Mammary epithelial cell (primary cell): ENCODE measurements at regions of chr11 and their contacts with region 1.

Region 1: GRCh38 chr11:63768237-63769043 is at the start of gene ZFTA:
- DNase-seq: peak; percentile 43
- H3K4me3 ChIP-seq: peak within 1 kb of the TSS; percentile 65 to 84 (median 71)
- H3K27ac ChIP-seq: no peak within 1 kb of the TSS
- H3K4me1 ChIP-seq: peaks cover 11% of the 10 kb centered on the region
- H3K27me3 ChIP-seq: no peaks in the 10 kb centered on the region
- CTCF ChIP-seq: peak; percentile 20 to 47
- total RNA-seq, gene ZFTA: 4.7 to 10.0 TPM

Region 2: DNA sequence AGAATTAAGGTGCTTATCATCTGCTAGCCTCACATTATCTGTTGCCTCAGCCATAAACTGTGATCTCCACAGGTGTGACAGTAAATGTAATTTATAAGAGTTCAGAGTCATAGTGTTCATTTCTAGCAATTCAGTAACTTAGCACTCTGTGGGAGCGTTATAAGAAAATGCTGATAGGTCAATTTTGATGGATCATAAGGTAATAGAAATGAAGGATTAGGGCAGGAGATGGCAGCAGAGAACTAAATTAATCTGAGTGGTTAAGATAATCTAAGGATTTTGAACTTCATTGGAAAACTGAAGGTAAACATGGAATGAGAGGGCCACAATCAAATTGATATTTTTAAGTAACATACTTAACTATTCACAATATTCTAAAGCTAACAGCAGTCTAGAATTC is 425.3 kb before region 1 on chr11:
- CTCF ChIA-PET with region 1: no interaction called
- dilution Hi-C with region 1: no loop called
- in situ Hi-C with region 1: no loop called
- intact Hi-C with region 1: no loop called
- DNase-seq: no peak
- H3K4me3 ChIP-seq: no peak overlapping the region
- H3K27ac ChIP-seq: no peak overlapping the region
- H3K4me1 ChIP-seq: no peaks in the 10 kb centered on the region
- H3K27me3 ChIP-seq: no peaks in the 10 kb centered on the region
- CTCF ChIP-seq: no peak

Region 3: GRCh38 chr11:63635762-63636465 is 132.5 kb before region 1 on chr11:
- CTCF ChIA-PET with region 1: no interaction called
- dilution Hi-C with region 1: no loop called
- in situ Hi-C with region 1: no loop called
- intact Hi-C with region 1: no loop called
- DNase-seq: peak; percentile 37
- H3K4me3 ChIP-seq: no peak overlapping the region
- H3K27ac ChIP-seq: no peak overlapping the region
- H3K4me1 ChIP-seq: no peaks in the 10 kb centered on the region
- H3K27me3 ChIP-seq: no peaks in the 10 kb centered on the region
- CTCF ChIP-seq: peak; percentile 62 to 79

Region 4: DNA sequence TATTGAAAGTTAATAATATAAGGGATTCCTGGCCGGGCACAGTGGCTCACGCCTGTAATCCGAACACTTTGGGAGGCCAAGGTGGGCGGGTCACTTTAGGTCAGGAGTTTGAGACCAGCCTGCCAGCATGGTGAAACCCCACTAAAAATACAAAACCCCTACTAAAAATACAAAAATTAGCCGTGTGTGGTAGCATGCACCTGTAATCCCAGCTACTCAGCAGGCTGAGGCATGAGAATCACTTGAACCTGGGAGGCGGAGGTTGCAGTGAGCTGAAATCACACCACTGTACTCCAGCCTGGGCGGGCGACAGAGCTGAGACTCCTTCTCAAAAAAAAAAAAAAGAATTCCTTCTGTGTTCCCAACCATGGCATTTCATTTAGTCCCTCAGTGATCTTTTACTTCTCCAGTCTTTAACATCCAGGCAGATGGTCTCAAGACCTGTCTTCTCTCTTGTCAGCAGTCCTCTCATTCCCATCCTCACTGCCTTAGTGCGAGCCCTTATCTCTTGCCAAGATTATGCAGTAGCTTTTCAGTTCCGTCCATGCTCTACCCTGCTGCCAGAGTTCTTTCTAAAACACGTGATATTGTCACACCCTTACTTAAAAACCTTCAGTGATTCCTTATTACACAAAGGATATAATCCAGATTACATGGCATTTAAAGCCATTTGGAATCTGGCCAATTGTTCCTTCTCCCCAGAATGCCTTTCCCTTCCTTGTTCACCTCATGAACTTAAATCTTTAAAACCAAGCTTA is 69.3 kb before region 1 on chr11:
- CTCF ChIA-PET with region 1: no interaction called
- dilution Hi-C with region 1: no loop called
- in situ Hi-C with region 1: no loop called
- intact Hi-C with region 1: no loop called
- DNase-seq: no peak
- H3K4me3 ChIP-seq: no peak overlapping the region
- H3K27ac ChIP-seq: no peak overlapping the region
- H3K4me1 ChIP-seq: no peaks in the 10 kb centered on the region
- H3K27me3 ChIP-seq: no peaks in the 10 kb centered on the region
- CTCF ChIP-seq: no peak

Region 5: GRCh38 chr11:63813035-63813562 is 44.7 kb after region 1 on chr11 and contains the start of gene SPINDOC:
- CTCF ChIA-PET with region 1: interaction called, 11 read pairs
- dilution Hi-C with region 1: loop called (anchors 5 kb)
- in situ Hi-C with region 1: no loop called
- intact Hi-C with region 1: loop called (anchors 2 kb)
- DNase-seq: peak; percentile 68
- H3K4me3 ChIP-seq: peak within 1 kb of the TSS; percentile 71 to 97 (median 95)
- H3K27ac ChIP-seq: peak within 1 kb of the TSS; percentile 19
- H3K4me1 ChIP-seq: peaks cover 13% of the 10 kb centered on the region
- H3K27me3 ChIP-seq: no peaks in the 10 kb centered on the region
- CTCF ChIP-seq: no peak
- total RNA-seq, gene SPINDOC: 19.2 to 24.4 TPM

Region 6: DNA sequence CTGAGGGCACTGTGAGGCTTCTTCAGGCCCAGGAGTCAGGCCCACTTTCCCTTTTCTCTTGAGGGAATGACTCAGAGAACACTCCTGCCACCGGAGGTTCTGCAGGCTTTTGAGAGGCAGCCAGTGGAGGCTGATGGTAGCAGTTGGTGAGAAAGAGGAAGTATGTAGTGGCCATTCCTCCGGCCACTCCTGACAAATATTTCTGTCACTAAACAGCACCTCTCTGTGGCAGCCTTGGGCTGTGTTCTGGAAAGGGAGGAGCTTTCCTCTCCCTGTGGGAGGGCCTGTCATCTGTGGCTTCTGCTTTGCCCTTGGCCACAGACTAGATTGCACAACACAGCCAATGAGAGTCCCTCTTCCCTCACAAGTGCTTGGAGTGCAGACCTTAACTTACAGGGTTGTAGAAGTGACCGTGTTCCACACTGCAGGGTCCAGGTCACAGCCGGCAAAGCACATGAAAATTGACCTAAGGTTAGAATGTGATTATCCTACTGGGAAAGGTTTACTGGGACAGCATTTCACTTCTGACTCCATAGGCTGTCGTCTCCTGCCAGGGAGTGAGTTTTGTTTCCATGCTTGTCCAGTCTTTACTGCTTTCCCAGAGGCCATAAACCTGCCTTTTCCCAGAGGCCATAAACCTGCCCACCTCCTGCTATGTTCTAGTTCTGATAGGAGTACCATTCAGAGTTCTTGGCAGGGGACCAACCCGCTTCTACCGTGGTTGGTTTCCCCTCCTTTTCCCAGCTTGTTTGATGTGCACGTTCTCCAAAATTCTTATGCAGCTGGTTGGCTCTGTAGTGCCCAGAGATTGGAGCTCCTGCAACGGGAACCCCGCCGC is 103.7 kb after region 1 on chr11:
- CTCF ChIA-PET with region 1: no interaction called
- dilution Hi-C with region 1: no loop called
- in situ Hi-C with region 1: loop called in 1 of 2 experiments (anchors 25 kb)
- intact Hi-C with region 1: no loop called
- DNase-seq: peak; percentile 93
- H3K4me3 ChIP-seq: no peak overlapping the region
- H3K27ac ChIP-seq: no peak overlapping the region
- H3K4me1 ChIP-seq: peaks cover 38% of the 10 kb centered on the region
- H3K27me3 ChIP-seq: no peaks in the 10 kb centered on the region
- CTCF ChIP-seq: peak in 1 of 2 donors; percentile 49

Region 7: GRCh38 chr11:63888170-63889086 is 120.0 kb after region 1 on chr11:
- CTCF ChIA-PET with region 1: no interaction called
- dilution Hi-C with region 1: no loop called
- in situ Hi-C with region 1: no loop called
- intact Hi-C with region 1: loop called (anchors 5 kb)
- DNase-seq: peak; percentile 87
- H3K4me3 ChIP-seq: peak overlapping the region; percentile 47 to 53 (median 53)
- H3K27ac ChIP-seq: peak overlapping the region; percentile 85
- H3K4me1 ChIP-seq: peaks cover 34% of the 10 kb centered on the region
- H3K27me3 ChIP-seq: no peaks in the 10 kb centered on the region
- CTCF ChIP-seq: no peak

Region 8: GRCh38 chr11:63945477-63946163 is 177.2 kb after region 1 on chr11:
- CTCF ChIA-PET with region 1: interaction called, 8 read pairs
- dilution Hi-C with region 1: no loop called
- in situ Hi-C with region 1: no loop called
- intact Hi-C with region 1: loop called (anchors 1 kb)
- DNase-seq: peak; percentile 64
- H3K4me3 ChIP-seq: no peak overlapping the region
- H3K27ac ChIP-seq: no peak overlapping the region
- H3K4me1 ChIP-seq: peaks cover 3% of the 10 kb centered on the region
- H3K27me3 ChIP-seq: no peaks in the 10 kb centered on the region
- CTCF ChIP-seq: peak; percentile 54 to 68

Region 9: DNA sequence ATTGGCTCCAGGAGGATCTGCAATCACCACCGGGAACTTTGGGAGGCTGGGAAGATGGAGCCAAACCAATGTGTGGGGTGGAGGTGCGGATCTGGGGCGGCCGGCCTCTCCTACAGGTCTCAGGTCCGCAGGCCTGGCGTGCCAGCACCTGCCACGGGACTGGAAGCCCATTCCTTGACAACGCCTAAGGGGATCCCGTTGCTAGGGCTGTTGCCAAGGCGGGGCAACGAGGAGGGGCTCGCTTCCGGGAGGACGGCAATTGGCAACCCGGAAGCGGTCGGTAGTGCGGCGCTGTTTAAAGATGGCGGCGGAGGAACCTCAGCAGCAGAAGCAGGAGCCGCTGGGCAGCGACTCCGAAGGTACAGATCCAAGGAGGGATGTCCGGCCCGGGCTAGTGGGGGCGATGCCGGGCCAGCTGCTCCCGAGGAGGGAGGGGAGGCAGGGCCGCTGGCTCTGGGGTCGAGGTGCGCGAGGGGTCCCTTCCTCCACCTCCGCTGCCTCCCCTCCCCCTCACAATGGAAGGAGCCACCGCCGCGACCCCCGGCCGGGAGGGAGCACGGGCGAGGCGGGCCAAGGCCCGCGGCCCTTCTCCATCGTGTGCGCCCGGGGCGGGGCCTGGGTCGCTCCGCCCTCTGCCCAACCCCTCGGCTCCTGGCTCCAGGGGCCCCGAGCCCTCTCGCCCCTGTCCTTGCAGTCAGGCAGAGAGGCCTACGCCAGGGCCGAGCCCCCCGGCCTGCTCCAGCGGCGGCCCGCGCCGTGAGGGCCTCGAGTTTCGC is 217.9 kb after region 1 on chr11 and contains the start of gene OTUB1:
- CTCF ChIA-PET with region 1: no interaction called
- dilution Hi-C with region 1: no loop called
- in situ Hi-C with region 1: no loop called
- intact Hi-C with region 1: loop called (anchors 5 kb)
- DNase-seq: peak; percentile 97
- H3K4me3 ChIP-seq: peak within 1 kb of the TSS; percentile 83 to 99 (median 89)
- H3K27ac ChIP-seq: peak within 1 kb of the TSS; percentile 76
- H3K4me1 ChIP-seq: peaks cover 20% of the 10 kb centered on the region
- H3K27me3 ChIP-seq: no peaks in the 10 kb centered on the region
- CTCF ChIP-seq: no peak
- total RNA-seq, gene OTUB1: 48.0 to 101 TPM

Region 10: GRCh38 chr11:64152841-64153691 is 384.6 kb after region 1 on chr11:
- CTCF ChIA-PET with region 1: no interaction called
- dilution Hi-C with region 1: no loop called
- in situ Hi-C with region 1: no loop called
- intact Hi-C with region 1: loop called (anchors 1 kb)
- DNase-seq: peak; percentile 29
- H3K4me3 ChIP-seq: peak overlapping the region in 2 of 3 experiments; percentile 7 to 17
- H3K27ac ChIP-seq: no peak overlapping the region
- H3K4me1 ChIP-seq: peaks cover 4% of the 10 kb centered on the region
- H3K27me3 ChIP-seq: no peaks in the 10 kb centered on the region
- CTCF ChIP-seq: peak; percentile 87 to 99